ENCODE measurements at regions of chr12 and their contacts with region 1.

Region 1: GRCh38 chr12:3777206-3777809 is 24.4 kb upstream of the CRACR2A start:
- DNase-seq: no peak
- ATAC-seq: peak; percentile 77

Region 2: DNA sequence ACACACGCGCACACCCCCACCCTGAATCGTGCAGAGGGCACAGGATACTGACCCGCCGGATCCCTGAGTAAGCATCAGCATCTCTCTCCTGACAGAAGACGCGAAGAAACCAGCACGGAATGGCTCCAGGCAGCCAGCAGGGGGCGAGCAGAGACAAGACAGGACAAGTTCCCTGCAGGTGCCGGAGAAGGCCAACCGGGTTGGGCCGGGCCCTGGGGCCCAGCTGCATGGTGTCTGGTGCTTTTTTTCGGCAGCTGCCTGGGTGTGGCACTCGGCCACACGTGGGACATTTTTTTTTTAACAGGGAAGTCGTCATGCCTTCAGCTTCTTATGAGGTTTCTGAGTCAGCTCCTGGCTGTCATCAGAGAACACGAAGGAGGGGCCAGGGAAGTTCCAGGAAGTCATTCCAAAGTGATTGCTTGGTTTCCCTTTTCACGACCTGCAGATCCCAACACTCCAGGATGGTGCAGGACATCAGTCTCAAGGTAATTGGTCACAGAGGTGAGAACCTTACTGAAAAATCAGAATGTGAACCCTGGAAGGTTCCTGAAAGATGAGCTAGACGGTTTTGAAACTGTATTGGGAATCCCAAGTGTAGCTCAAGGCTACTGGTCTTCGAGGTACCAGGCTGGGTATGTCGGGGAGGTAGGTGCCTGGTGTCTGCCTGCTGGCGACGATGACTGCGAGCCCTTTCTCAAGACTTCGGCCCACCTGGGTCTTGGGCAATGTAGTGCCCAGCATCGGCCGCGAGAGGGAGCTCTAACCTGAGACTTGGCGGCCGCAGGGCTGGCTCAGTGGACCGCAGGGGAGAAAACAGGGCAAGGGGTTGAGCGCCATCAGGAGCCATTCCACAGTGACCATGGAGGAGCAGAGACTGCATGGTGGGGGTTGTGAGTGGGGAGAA is 477.1 kb before region 1 on chr12:
- intact Hi-C with region 1: loop called (anchors 5 kb)
- DNase-seq: peak; percentile 92
- ATAC-seq: peak; percentile 87

Region 3: GRCh38 chr12:3656946-3657622 is 120.2 kb before region 1 on chr12:
- intact Hi-C with region 1: loop called (anchors 2 kb)
- DNase-seq: no peak
- ATAC-seq: no peak

Region 4: DNA sequence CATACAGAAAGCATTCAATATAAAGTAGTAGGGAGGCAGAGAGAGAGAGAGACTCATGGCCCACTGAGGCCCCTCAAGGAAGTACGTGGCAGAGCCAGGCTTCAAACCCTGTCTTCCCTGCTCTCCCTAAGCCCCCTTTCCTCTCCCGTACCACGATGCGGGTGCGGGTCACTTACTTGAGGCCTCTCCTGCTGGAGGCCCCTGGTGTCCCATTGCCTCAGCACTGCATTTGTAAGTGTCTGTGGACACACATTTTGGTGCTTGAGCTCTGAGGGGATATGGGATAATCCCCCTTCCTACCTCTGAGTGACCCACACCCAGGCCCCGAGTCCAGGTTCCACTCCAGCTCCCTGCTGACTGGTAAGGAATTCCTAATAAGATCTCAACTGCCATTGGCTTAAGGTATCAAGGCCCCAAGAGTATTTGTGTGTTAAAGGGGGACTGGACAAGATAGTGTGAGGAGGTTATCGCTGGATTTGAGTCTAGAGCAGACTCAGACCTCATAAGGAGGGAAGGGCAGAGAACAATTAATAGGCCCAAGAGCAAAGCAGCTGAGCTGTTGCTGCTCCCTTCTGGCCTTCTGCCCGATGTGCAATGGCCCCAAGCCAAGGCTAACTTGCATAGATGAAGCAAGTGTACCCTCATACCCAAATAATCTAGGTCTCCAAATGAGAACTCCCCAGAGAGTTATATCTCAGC is 96.3 kb before region 1 on chr12:
- intact Hi-C with region 1: loop called (anchors 10 kb)
- DNase-seq: peak; percentile 85
- ATAC-seq: peak; percentile 32